AG04449 (cell line): ENCODE measurements at regions of chr20 and their contacts with region 1.

Region 1: GRCh38 chr20:49484180-49485140 is 2.0 kb upstream of the KCNB1 start:
- DNase-seq: peak; percentile 5
- H3K4me3 ChIP-seq: peak overlapping the region; percentile 55
- CTCF ChIP-seq: peak; percentile 91

Region 2: GRCh38 chr20:49323622-49324238 is 160.7 kb before region 1 on chr20:
- CTCF ChIA-PET with region 1: interaction called, 241 read pairs
- POLR2A ChIA-PET with region 1: no interaction called
- DNase-seq: no peak
- H3K4me3 ChIP-seq: no peak overlapping the region
- CTCF ChIP-seq: peak; percentile 44

Region 3: DNA sequence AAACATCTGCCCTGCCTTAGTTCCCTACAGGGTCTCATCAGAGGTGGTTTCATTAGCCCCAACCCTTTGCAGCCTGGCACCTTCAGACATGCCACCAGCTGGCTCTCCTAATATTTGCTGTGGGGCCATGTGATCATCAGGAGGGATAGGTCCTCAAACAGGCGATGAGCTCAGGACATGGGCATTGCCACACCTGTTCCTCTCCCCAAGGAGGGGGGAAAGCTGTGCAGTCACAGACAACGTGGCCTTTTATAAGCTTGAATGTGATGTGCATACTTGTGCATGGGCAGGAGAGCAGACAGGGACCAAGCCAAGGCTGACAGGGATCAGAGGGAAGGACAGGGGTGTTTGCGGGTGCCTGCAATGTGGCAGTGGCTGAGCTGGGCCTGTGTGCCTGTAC is 127.8 kb before region 1 on chr20:
- CTCF ChIA-PET with region 1: interaction called, 14 read pairs
- POLR2A ChIA-PET with region 1: no interaction called
- DNase-seq: no peak
- H3K4me3 ChIP-seq: no peak overlapping the region
- CTCF ChIP-seq: no peak

Region 4: GRCh38 chr20:49460916-49461315 is 23.5 kb before region 1 on chr20:
- CTCF ChIA-PET with region 1: interaction called, 14 read pairs
- POLR2A ChIA-PET with region 1: no interaction called
- DNase-seq: no peak
- H3K4me3 ChIP-seq: no peak overlapping the region
- CTCF ChIP-seq: no peak

Region 5: GRCh38 chr20:49534255-49534712 is 49.8 kb after region 1 on chr20:
- CTCF ChIA-PET with region 1: interaction called, 18 read pairs
- POLR2A ChIA-PET with region 1: no interaction called
- DNase-seq: no peak
- H3K4me3 ChIP-seq: no peak overlapping the region
- CTCF ChIP-seq: peak; percentile 74

Region 6: DNA sequence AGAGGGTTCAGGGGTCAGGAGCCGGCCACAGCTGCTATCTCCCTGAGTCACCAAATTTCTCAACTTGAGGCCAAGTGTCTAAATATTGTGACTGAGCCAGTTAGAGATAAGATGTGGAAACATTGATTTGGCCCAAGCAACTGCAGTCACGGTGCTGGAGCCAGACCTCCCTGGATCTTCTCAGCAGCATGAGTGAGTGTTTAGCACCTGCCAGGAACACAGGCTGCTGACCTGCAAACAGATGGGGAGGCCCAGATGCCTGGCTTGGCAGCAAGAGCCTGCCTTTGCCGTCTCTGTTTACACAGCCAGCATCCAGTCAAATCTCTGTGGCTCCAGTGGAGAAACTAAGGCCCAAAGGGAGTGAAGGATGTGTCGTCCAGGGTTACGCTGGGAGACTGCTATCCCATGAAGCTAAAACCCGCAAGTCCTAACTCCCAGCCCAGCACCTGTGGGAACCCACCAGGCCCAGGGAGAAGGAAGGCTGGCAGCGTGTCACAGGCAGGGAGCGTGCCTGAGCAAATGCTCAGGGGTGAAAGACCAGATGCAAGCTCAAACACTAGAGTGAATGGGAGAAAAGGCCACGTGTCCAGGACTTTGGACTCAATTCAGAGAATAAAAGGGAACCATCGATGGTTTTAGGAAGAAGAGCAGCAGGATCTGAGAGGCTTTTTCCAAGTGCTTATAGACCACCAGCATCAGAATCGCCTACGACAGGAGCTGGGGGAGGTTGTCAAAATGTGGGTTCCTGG is 99.4 kb after region 1 on chr20:
- CTCF ChIA-PET with region 1: no interaction called
- POLR2A ChIA-PET with region 1: no interaction called
- DNase-seq: no peak
- H3K4me3 ChIP-seq: no peak overlapping the region
- CTCF ChIP-seq: no peak